ENCODE measurements at regions of chr15 and their contacts with region 1.

Region 1: DNA sequence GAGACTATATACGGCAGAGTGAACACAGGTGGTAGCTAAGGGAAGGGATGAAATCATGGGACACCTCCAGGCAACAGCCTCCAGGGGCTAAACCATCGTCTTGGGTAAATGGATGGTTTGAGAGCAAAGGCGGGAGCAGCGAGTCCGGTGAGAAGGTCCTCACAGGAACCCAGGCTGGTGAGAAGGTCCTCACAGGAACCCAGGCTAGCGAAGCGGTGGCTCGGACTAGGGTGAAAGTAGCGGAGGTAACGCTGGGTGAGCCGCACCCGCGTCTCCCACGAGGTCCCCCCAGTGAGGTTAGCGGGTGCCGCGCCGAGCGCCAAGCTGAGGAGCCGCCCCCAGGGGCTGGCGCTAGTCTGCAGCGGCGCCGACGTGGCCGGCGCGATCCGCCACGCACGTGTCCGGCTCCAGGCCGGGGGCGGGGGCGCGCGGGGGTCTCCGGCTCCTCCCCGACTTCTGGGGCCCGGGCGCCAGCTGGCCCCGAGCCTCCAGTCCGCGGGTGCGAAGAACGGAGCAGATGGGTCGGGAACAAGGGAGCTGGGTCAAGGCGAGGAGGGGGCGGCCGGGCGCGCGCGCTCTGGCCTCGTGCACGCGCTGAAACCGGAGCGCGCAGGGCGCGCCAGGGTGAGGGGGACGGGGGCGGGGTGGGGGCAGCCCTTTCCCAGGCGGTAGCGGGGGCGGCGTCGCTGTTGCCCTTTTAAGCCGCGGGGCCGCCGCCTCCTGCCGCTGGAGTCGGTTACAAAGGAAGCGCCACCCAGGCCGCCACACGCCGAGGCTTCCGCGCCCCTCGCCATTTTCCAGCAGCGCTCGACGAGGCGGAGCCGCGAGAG is at the start of gene UBE2Q2:
- DNase-seq: peak; percentile 78
- H3K4me3 Mint-ChIP-seq: peak within 1 kb of the TSS; percentile 89
- H3K27ac Mint-ChIP-seq: peak within 1 kb of the TSS; percentile 60
- H3K4me1 Mint-ChIP-seq: peaks cover 17% of the 10 kb centered on the region
- H3K27me3 Mint-ChIP-seq: peaks cover 8% of the 10 kb centered on the region
- CTCF ChIP-seq: no peak
- total RNA-seq, gene UBE2Q2: 34.1 and 34.7 TPM in 2 replicates

Region 2: DNA sequence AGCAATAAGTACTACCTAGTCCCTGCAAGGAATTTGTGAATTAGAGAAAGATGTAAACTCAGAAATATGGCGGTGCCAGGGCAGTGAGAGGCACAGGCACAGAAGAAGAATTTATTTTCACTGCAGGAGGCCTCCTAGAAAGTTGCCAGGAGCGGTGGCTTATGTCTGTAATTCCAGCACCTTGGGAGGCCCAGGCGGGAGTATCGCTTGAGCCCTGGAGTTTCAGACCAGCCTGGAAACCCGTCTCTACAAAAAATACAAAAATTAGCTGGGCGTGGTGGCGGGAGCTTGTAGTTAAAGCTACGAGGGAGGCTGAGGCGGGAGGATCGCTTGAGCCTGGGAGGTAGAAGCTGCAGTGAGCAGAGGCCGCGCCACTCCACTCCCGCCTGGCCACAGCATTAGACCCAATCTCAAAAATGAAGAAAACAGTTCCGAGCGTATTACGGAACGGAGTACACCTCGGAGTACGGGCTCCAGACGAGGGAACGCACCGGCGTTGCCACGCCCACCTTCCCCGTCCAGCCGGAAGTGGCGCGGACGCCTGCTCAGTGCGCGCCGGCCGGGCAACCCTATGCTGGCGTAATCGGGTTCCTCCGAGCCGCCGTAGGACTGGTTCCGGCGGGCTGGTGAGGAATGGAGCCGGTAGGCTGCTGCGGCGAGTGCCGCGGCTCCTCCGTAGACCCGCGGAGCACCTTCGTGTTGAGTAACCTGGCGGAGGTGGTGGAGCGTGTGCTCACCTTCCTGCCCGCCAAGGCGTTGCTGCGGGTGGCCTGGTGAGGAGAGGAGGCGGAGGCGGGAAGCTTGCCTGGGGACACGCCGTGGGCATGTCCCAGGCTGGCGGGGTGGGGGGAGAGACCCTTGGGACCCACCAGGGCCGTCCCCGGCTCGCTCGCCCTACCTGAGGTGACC is 60.6 kb after region 1 on chr15 and contains the start of gene FBXO22:
- CTCF ChIA-PET with region 1: no interaction called
- intact Hi-C with region 1: loop called (anchors 5 kb)
- DNase-seq: peak; percentile 98
- H3K4me3 Mint-ChIP-seq: peak within 1 kb of the TSS; percentile 97
- H3K27ac Mint-ChIP-seq: peak within 1 kb of the TSS; percentile 89
- H3K4me1 Mint-ChIP-seq: no peaks in the 10 kb centered on the region
- H3K27me3 Mint-ChIP-seq: no peaks in the 10 kb centered on the region
- CTCF ChIP-seq: no peak
- total RNA-seq, gene FBXO22: 49.2 and 49.5 TPM in 2 replicates

Measured in Calu3 (cell line).